ENCODE measurements at regions of chr20 and their contacts with region 1.

Region 1: GRCh38 chr20:956330-956951 is 40.3 kb upstream of the ANGPT4 start:
- DNase-seq: peak; percentile 72
- ATAC-seq: peak; percentile 87
- H3K4me3 ChIP-seq: no peak overlapping the region
- H3K27ac ChIP-seq: no peak overlapping the region
- H3K4me1 ChIP-seq: no peaks in the 10 kb centered on the region; the same call in 1 of the 2 replicates
- H3K27me3 ChIP-seq: 0 out of 2 replicates have a peak, but pooled peaks cover 9% of the 10 kb centered on the region
- CTCF ChIP-seq: peak; percentile 94

Region 2: DNA sequence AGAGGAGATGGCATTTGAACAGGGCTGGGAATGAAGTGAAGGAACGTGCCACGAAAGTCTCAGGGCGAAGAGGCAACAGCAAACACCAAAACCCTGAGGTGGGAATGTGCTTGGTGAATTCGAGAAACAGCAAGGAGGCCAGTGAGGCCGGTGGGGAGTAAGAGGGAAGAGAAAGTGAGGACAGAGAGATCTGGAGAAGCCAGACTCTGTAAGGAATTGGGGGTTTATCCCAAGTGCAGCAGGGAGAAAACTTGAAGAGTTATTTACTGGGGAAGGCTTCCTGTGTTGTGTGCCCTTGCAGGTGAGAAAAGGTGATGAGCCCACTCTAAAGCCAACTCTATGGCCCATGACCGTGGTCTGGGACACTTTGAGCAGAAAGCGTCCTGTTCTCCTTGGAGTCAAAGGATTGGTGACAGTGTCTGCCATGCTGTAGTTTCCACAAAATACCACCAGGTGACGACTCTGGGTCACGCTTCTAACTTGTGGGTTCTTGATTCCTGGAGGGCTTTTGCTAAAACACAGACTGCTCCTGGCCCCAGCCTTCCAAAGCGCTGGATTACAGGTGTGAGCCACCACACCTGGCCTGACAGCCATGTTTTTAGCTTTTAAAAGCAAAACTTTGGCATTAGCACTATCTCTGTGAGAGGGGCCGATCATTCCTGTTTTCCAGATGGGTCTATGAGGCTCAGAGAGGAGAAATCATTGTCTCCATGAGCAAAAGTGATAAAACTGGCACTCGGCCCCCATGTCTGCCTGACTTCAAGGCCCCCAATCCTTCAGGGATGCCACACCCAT is 394.8 kb before region 1 on chr20:
- CTCF ChIA-PET with region 1: no interaction called
- POLR2A ChIA-PET with region 1: no interaction called
- in situ Hi-C with region 1: no loop called
- intact Hi-C with region 1: no loop called
- DNase-seq: peak; percentile 80
- ATAC-seq: peak; percentile 94
- H3K4me3 ChIP-seq: no peak overlapping the region
- H3K27ac ChIP-seq: no peak overlapping the region
- H3K4me1 ChIP-seq: no peaks in the 10 kb centered on the region
- H3K27me3 ChIP-seq: no peaks in the 10 kb centered on the region
- CTCF ChIP-seq: peak; percentile 99

Region 3: GRCh38 chr20:1019344-1019743 is 62.9 kb after region 1 on chr20:
- CTCF ChIA-PET with region 1: interaction called, 5 read pairs
- POLR2A ChIA-PET with region 1: interaction called, 11 read pairs
- in situ Hi-C with region 1: no loop called
- intact Hi-C with region 1: no loop called
- DNase-seq: no peak
- ATAC-seq: no peak
- H3K4me3 ChIP-seq: no peak overlapping the region
- H3K27ac ChIP-seq: no peak overlapping the region
- H3K4me1 ChIP-seq: no peaks in the 10 kb centered on the region
- H3K27me3 ChIP-seq: peaks cover 20% of the 10 kb centered on the region
- CTCF ChIP-seq: no peak

Region 4: DNA sequence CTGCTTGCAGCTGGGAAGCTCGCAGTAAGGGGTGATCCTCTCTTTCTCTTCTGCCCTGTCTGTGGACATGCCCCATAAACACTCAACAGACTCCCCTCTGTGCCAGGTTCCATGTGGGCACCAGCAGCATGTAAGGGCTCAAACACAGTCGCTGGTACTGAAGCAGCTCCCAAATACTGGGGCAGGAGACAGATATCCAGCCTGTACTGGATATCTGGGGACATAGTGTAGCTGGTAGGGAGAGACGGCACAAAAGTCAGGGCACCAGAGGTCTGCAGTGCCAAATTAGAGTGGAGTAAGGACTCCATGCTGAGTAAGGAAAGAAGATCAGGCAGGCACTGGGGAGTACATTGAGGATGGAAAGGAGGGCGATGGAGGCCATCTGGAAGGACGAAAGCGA is 94.0 kb after region 1 on chr20:
- CTCF ChIA-PET with region 1: no interaction called
- POLR2A ChIA-PET with region 1: no interaction called
- in situ Hi-C with region 1: no loop called
- intact Hi-C with region 1: no loop called
- DNase-seq: no peak
- ATAC-seq: no peak
- H3K4me3 ChIP-seq: no peak overlapping the region
- H3K27ac ChIP-seq: no peak overlapping the region
- H3K4me1 ChIP-seq: no peaks in the 10 kb centered on the region
- H3K27me3 ChIP-seq: no peaks in the 10 kb centered on the region
- CTCF ChIP-seq: no peak

Region 5: DNA sequence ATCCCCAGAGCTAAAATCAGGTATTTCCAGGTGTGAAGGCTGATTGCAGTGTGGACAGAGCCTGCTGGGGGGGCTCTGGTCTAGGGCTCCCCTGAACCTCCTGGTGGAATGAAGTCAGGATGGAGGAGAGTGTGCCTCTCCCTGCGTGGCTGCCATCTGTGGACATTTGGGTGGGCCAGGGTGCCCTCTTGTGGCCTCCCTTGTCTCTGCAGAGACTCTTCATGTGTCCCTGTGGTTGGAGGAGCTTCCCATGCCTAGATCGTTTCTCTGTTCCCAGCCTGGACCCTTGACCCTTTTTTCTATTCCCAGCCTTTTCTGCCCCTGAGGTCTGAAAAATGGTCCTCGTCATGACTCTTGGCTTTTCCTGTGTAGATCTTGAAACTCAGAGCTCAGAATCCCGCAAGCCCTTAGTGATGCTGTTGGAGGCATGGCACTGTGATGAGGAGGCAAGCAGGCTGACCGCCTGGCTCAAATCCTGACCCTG is 152.0 kb after region 1 on chr20:
- CTCF ChIA-PET with region 1: interaction called, 4 read pairs
- POLR2A ChIA-PET with region 1: no interaction called
- in situ Hi-C with region 1: no loop called
- intact Hi-C with region 1: loop called (anchors 5 kb)
- DNase-seq: peak; percentile 50
- ATAC-seq: peak; percentile 95
- H3K4me3 ChIP-seq: no peak overlapping the region
- H3K27ac ChIP-seq: no peak overlapping the region
- H3K4me1 ChIP-seq: peaks cover 3% of the 10 kb centered on the region; the same call in 1 of the 2 replicates
- H3K27me3 ChIP-seq: no peaks in the 10 kb centered on the region
- CTCF ChIP-seq: peak; percentile 91

Measured in Panc1 (cell line).